GM13977 (cell line): ENCODE measurements at regions of chr14 and their contacts with region 1.

Region 1: GRCh38 chr14:75487155-75487671 is 35.1 kb upstream of the BATF start:
- DNase-seq: peak; percentile 59
- CTCF ChIP-seq: no peak

Region 2: DNA sequence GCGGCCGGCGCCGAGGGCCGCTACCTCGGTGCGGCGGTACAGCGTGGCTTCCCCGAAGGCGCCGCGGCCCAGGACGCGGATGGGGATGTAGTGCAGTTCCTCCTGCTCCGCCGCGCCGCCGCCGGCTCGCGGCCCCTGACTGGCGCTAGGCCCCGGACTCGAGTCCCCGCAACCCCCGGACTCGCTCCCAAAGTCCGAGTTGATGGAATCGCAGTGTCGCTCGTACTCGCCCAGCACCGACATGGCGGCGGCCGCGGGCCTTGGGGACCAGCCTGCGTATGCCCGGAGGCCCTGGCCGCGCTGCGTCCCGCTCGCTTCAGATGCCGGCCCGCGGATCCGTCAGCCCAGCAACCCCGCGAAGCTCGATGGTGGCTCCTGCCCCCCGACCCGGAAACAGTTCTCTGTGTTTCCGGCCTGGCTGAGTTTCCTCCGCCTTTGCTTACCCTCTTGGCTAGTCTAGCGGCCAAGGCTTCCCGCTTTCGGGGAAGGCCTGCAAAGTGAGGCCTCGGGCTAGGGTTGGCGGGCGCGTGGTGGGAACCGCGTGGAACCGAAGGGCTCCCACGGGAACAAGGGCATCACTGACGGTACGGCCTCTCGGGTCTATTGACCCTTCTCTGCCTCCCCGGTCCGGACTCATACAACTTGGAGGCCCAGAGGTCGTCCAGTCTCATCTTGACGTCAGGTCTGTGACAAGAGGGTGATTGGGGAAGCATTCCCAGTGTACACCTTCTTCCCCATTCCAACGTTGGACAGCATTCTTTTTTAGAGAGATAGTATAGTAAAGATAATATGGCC is 360.3 kb before region 1 on chr14 and contains the start of gene NEK9:
- in situ Hi-C with region 1: loop called (anchors 25 kb)
- DNase-seq: peak; percentile 92
- CTCF ChIP-seq: no peak

Region 3: GRCh38 chr14:75383721-75384120 is 103.5 kb before region 1 on chr14:
- in situ Hi-C with region 1: no loop called
- DNase-seq: no peak
- CTCF ChIP-seq: no peak